Heart right ventricle (tissue), 16 donors: ENCODE measurements at regions of chr16 and their contacts with region 1.

Region 1: DNA sequence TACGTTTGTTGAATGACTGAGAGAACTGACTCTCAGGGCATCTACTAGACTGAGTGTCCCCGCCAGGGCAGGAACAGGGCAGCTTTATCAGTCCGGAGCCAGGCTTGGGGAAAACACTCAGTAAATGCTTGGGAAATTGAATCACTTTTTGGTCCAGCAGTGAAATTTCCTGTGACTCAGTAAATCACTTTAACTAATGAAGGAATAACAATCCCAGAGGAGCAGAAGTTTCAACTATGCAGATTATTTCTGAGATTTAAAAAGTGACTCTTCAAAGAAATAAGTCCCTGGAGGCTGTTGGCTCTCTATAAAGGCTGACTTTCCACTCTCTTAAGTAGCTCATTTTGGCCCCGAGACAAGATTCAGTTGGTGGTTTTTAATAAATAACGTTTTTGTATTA is 101.8 kb downstream of the FOXL1 start:
- DNase-seq: no peak
- ATAC-seq: peak; percentile 35 to 75 (median 63)
- H3K4me3 ChIP-seq: peak overlapping the region in 1 of 10 donors; percentile 9
- H3K27ac ChIP-seq: peak overlapping the region in 9 of 10 donors; percentile 18 to 83 (median 75)
- H3K4me1 ChIP-seq: peaks cover 0 to 35% (median 9%) of the 10 kb centered on the region in 9 donors
- H3K27me3 ChIP-seq: peaks cover 0 to 42% (median 11%) of the 10 kb centered on the region in 7 donors
- CTCF ChIP-seq: no peak

Region 2: DNA sequence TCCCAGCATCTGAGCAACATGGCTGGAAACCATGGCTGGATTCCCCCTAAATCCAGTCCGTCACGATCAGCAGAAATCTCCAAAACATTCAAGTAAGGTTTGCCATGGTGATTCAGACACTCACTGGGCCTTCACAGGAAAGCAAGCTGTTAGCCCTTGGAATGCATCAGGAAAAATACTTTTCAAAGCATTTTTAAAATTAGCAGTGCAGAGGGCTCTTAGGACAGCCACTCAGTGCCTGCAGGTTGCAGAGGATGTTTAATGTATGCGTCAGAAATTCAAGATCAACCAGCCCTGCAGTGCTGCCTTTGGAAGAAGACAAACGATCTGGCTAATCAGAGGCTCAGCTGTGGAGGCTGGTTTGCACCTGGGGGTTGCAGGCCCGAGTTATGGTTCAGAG is 51.5 kb before region 1 on chr16:
- intact Hi-C with region 1: loop called in 1 of 10 experiments (anchors 10 kb)
- DNase-seq: no peak
- ATAC-seq: no peak
- H3K4me3 ChIP-seq: no peak overlapping the region
- H3K27ac ChIP-seq: no peak overlapping the region
- H3K4me1 ChIP-seq: no peaks in the 10 kb centered on the region
- H3K27me3 ChIP-seq: peaks cover 0 to 7% (median 0%) of the 10 kb centered on the region in 7 donors
- CTCF ChIP-seq: no peak

Region 3: GRCh38 chr16:86751076-86752030 is 71.2 kb after region 1 on chr16:
- intact Hi-C with region 1: loop called in 1 of 10 experiments (anchors 10 kb)
- DNase-seq: no peak
- ATAC-seq: no peak
- H3K4me3 ChIP-seq: no peak overlapping the region
- H3K27ac ChIP-seq: peak overlapping the region in 1 of 10 donors; percentile 1
- H3K4me1 ChIP-seq: peaks cover 0 to 15% (median 0%) of the 10 kb centered on the region in 9 donors
- H3K27me3 ChIP-seq: peaks cover 0 to 14% (median 2%) of the 10 kb centered on the region in 7 donors
- CTCF ChIP-seq: no peak